Activated CD4-positive, alpha-beta memory T cell treated with anti-CD3 and anti-CD28 coated beads for 36 hours (primary cell): ENCODE measurements at regions of chr17 and their contacts with region 1.

Region 1: GRCh38 chr17:81142301-81143199 is 22.8 kb upstream of the PVALEF start:
- DNase-seq: peak; percentile 77
- H3K4me3 Mint-ChIP-seq: no peak overlapping the region
- H3K27ac Mint-ChIP-seq: no peak overlapping the region
- H3K4me1 Mint-ChIP-seq: no peaks in the 10 kb centered on the region
- H3K27me3 Mint-ChIP-seq: peaks cover 2% of the 10 kb centered on the region

Region 2: DNA sequence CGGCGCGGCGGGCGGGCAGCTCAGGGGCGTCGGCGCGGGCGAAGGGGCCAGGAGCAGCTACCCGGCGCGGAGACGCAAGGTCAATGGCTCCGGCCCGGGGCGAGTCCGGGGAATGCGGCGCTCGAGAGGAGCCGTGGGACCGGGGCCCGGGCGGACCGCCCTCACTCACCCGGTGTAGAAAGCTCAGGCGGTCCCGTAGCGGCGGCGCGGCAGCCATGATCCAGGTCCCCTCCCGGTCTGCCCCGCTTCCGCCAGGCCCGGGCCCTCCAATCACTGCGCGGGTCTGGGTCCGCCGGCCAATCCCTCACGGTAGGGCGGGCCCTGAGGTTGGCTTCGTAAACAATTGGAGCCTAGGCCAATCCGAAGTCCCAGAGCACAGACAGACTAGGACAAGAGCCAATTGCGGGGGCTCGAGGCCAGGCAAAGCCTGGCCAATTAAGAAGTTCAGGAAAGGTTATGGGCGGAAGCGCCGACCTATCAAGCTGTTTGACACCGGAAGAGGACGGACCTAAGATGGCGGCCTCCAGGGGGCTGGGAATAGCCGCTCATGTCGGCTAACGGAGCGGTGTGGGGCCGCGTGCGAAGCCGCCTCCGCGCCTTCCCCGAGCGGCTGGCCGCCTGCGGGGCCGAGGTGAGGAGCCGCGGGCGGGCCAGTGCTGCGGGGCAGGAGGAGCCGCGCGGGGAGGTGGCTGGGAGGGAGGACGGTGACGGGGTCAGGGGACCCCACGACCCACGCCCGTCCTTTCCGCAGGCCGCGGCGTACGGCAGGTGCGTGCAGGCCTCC is 96.5 kb after region 1 on chr17 and contains the starts of genes NDUFAF8 and TEPSIN:
- CTCF ChIA-PET with region 1: interaction called, 3 read pairs
- POLR2A ChIA-PET with region 1: interaction called, 4 read pairs
- intact Hi-C with region 1: loop called (anchors 1 kb)
- DNase-seq: peak; percentile 98
- H3K4me3 Mint-ChIP-seq: peak within 1 kb of the TSS; percentile 96
- H3K27ac Mint-ChIP-seq: peak within 1 kb of the TSS; percentile 92
- H3K4me1 Mint-ChIP-seq: peaks cover 28% of the 10 kb centered on the region
- H3K27me3 Mint-ChIP-seq: no peaks in the 10 kb centered on the region
- total RNA-seq, gene NDUFAF8: 49.8 to 55.9 TPM
- total RNA-seq, gene TEPSIN: 20.0 to 24.6 TPM